K562 (cell line): ENCODE measurements at regions of chr1 and their contacts with region 1.

Region 1: DNA sequence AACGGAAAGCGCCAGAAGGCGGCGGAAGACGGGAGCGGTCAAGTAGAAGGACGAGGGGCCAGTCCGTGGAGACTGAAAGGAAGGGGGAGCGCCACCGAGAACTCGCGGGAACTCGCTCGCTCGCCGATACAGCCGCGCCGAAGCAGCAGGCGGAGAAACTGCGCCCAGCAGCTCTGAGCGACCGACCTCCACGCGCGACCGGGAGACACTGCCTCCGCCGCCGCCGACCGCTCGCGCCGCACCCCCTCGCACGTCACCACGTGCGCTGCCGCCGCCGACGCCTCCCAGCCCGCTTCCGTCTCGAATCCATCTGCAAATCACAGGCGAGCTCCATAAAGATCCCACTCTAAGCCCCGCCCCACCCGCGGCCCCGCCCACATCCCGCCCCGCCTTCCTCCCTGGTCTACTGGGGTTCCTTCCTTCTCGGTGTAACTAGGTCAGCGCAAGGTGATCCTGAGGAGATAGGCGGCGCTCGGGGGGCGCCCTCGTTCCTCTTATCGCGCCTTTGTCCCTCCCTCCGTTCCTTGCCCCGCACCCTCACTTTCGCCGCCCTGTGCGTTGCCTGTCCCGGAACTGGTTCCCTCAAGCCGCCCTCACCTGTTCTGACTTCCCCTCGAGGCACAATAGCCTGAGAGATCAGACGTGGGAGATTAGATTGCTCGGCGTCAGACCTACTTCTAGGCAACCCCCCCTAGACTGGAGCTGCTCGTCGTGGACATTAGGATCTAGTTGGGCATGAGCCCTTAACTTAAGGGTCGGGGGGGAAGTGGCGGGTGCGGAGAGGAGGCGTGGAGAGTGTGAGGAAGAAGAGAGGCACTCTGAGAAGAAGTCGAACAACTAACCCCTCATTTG is at the start of gene IVNS1ABP:
- DNase-seq: peak; percentile 97 to 98 (median 98)
- ATAC-seq: peak; percentile 79
- H3K4me3 ChIP-seq: peak within 1 kb of the TSS; percentile 77
- H3K27ac ChIP-seq: peak within 1 kb of the TSS; percentile 97
- H3K4me1 ChIP-seq: peaks cover 20 to 38% of the 10 kb centered on the region in 2 experiments
- H3K27me3 ChIP-seq: no peaks in the 10 kb centered on the region
- CTCF ChIP-seq: peak; percentile 24 to 62 (median 42); a peak in 5 of 6 replicates
- EP300 ChIP-seq: peak; percentile 45
- POLR2A ChIP-seq: peak; percentile 97
- RAD21 ChIP-seq: peak; percentile 47 to 58
- polyA plus RNA-seq, gene IVNS1ABP: 30.6 to 77.7 TPM

Region 2: DNA sequence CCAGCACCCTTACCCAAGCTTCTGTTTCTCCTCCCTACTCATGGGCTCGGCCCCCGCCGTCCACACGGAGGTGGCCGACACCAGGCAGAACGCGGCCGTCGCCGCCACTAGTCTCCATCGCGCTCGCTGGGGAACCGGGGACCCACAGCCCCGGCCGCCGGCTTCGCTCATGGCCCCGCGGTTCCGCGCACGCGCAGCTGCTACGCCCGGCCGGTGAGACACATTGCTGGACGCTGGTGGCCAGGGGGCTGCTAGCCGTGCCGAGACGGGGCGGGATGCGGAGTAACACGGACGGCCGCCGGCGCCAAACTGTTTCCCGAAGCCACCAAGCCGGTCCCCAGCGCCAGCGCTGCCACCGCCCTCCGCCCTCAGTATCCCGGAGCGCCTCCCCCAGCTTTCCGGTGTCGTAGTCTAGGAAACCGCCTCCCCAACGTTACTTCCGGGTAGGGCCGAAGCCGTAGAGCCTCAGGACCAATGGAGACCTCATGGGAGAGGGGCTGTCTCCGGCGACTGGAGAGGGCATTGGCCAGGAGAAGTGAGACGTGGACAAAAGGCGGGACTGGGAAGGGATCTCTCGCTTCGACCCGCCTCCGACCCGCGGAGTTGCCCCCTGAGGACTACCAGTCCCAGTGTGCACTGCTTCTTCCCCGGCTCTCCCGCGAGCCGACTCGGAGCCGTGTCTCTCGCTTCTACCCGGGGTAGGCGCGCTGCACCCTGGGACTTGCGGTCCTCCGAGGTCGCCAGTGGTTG is 562.6 kb before region 1 on chr1 and contains the start of gene EDEM3:
- CTCF ChIA-PET with region 1: no interaction called
- POLR2A ChIA-PET with region 1: interaction called, 3 read pairs
- in situ Hi-C with region 1: no loop called
- intact Hi-C with region 1: loop called (anchors 10 kb)
- DNase-seq: peak; percentile 97 to 100 (median 98)
- ATAC-seq: peak; percentile 93
- H3K4me3 ChIP-seq: peak within 1 kb of the TSS; percentile 83
- H3K27ac ChIP-seq: peak within 1 kb of the TSS; percentile 80
- H3K4me1 ChIP-seq: peaks cover 4 to 11% of the 10 kb centered on the region in 2 experiments; a peak in 3 of 5 replicates
- H3K27me3 ChIP-seq: no peaks in the 10 kb centered on the region
- CTCF ChIP-seq: peak in 1 of 3 experiments; percentile 0; a peak in 1 of 6 replicates
- EP300 ChIP-seq: no peak
- POLR2A ChIP-seq: peak; percentile 92
- RAD21 ChIP-seq: peak in 1 of 2 experiments; percentile 18; a peak in 1 of 4 replicates
- polyA plus RNA-seq, gene EDEM3: 15.8 to 18.5 TPM

Region 3: DNA sequence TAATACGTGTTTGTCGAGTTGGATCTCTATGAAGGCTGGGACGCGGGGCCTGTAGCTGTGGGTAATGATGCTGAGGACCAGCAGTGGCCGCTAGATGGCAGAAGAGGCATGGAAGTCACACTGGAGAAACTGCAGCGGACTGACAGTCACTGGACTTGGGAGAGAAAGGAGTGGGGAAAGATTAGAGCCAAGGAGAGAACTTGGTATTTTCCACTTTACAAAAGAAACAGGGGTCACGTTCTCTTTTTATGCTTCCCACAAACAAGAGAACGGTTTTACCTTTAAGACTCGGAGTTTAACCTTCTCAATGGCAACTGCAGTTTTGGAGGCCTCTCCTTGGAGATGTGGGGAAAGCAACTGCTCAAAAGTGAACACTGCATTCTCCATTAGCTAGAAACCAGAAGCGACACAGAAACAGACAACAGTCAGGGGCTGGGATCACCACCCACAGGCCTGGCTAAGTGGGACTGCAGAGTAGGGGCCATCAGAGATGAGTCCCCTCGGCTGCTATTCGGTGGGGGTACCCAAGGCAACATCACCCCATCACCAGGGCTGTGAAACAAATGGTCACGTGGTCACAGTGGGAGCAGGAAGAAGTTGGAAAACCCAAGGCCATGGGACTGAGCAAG is 511.5 kb before region 1 on chr1:
- CTCF ChIA-PET with region 1: no interaction called
- POLR2A ChIA-PET with region 1: no interaction called
- in situ Hi-C with region 1: no loop called
- intact Hi-C with region 1: no loop called
- DNase-seq: peak; percentile 85 to 94 (median 88)
- ATAC-seq: peak; percentile 98
- H3K4me3 ChIP-seq: no peak overlapping the region
- H3K27ac ChIP-seq: peak overlapping the region; percentile 36; the same call in 1 of the 3 replicates
- H3K4me1 ChIP-seq: peaks cover 10 to 11% of the 10 kb centered on the region in 2 experiments; a peak in 4 of 5 replicates
- H3K27me3 ChIP-seq: no peaks in the 10 kb centered on the region
- CTCF ChIP-seq: peak; percentile 91 to 98 (median 95)
- EP300 ChIP-seq: no peak
- POLR2A ChIP-seq: no peak
- RAD21 ChIP-seq: peak; percentile 93 to 97

Region 4: GRCh38 chr1:185208626-185209180 is 108.6 kb before region 1 on chr1:
- CTCF ChIA-PET with region 1: no interaction called
- POLR2A ChIA-PET with region 1: no interaction called
- in situ Hi-C with region 1: no loop called
- intact Hi-C with region 1: loop called (anchors 10 kb)
- DNase-seq: no peak
- ATAC-seq: no peak
- H3K4me3 ChIP-seq: no peak overlapping the region
- H3K27ac ChIP-seq: no peak overlapping the region
- H3K4me1 ChIP-seq: no peaks in the 10 kb centered on the region; a peak in 1 of 5 replicates
- H3K27me3 ChIP-seq: no peaks in the 10 kb centered on the region
- CTCF ChIP-seq: no peak
- EP300 ChIP-seq: no peak
- POLR2A ChIP-seq: no peak
- RAD21 ChIP-seq: no peak

Region 5: GRCh38 chr1:185300152-185300551 is 17.1 kb before region 1 on chr1:
- CTCF ChIA-PET with region 1: no interaction called
- POLR2A ChIA-PET with region 1: interaction called, 30 read pairs
- in situ Hi-C with region 1: no loop called
- intact Hi-C with region 1: no loop called
- DNase-seq: no peak
- ATAC-seq: no peak
- H3K4me3 ChIP-seq: no peak overlapping the region
- H3K27ac ChIP-seq: no peak overlapping the region
- H3K4me1 ChIP-seq: no peaks in the 10 kb centered on the region
- H3K27me3 ChIP-seq: no peaks in the 10 kb centered on the region
- CTCF ChIP-seq: no peak
- EP300 ChIP-seq: no peak
- POLR2A ChIP-seq: no peak
- RAD21 ChIP-seq: no peak

Region 6: GRCh38 chr1:185388815-185389214 is 71.6 kb after region 1 on chr1:
- CTCF ChIA-PET with region 1: no interaction called
- POLR2A ChIA-PET with region 1: no interaction called
- in situ Hi-C with region 1: no loop called
- intact Hi-C with region 1: no loop called
- DNase-seq: no peak
- ATAC-seq: peak; percentile 62
- H3K4me3 ChIP-seq: no peak overlapping the region
- H3K27ac ChIP-seq: peak overlapping the region; percentile 42; the same call in 2 of the 3 replicates
- H3K4me1 ChIP-seq: peaks cover 0 to 12% of the 10 kb centered on the region in 2 experiments; a peak in 3 of 5 replicates
- H3K27me3 ChIP-seq: no peaks in the 10 kb centered on the region
- CTCF ChIP-seq: no peak
- EP300 ChIP-seq: no peak
- POLR2A ChIP-seq: no peak
- RAD21 ChIP-seq: no peak

Region 7: DNA sequence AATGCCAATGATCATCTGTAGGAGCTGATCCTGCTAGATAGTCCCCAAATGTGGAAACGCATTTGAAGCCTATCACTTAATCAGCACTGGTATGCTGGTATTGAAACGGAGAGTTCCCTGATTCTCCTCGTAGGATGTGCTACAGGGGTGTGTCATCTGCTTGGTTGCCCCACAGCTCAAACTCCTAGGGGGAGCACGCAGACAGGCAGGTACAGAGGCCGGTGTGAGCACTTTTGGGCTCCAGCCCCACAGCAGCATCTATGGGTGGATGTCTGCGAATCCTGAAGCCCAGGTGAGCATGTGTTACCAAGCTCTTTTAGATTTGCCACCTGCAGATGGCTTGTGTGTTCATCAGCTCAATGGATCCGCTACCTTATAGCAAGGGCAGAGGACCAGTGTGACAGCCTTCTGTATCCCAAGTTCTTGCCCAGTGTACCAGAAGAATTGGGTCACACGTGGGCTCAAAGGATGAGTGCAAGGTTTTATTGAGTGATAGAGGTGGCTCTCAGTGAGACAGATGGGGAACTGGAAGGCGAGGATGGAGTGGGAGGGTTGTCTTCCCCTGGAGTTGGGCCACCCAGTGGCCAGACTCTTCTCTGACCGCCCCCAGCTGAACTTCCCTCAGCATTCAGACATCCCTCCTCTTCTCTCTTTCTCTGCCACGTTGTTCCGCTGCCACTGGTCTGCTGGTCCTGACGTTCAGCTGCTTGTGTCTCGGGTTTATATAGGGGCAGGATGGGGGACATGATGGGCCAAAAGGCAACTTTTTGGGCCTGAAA is 149.7 kb after region 1 on chr1:
- CTCF ChIA-PET with region 1: no interaction called
- POLR2A ChIA-PET with region 1: no interaction called
- in situ Hi-C with region 1: no loop called
- intact Hi-C with region 1: loop called (anchors 5 kb)
- DNase-seq: peak in 1 of 4 experiments; percentile 30
- ATAC-seq: peak; percentile 86
- H3K4me3 ChIP-seq: no peak overlapping the region
- H3K27ac ChIP-seq: no peak overlapping the region
- H3K4me1 ChIP-seq: peaks cover 0 to 8% of the 10 kb centered on the region in 2 experiments; a peak in 2 of 5 replicates
- H3K27me3 ChIP-seq: peaks cover 4% of the 10 kb centered on the region in 2 experiments; a peak in 3 of 5 replicates
- CTCF ChIP-seq: peak; percentile 5 to 47 (median 35); a peak in 2 of 6 replicates
- EP300 ChIP-seq: no peak
- POLR2A ChIP-seq: no peak
- RAD21 ChIP-seq: peak; percentile 34 to 57

Region 8: DNA sequence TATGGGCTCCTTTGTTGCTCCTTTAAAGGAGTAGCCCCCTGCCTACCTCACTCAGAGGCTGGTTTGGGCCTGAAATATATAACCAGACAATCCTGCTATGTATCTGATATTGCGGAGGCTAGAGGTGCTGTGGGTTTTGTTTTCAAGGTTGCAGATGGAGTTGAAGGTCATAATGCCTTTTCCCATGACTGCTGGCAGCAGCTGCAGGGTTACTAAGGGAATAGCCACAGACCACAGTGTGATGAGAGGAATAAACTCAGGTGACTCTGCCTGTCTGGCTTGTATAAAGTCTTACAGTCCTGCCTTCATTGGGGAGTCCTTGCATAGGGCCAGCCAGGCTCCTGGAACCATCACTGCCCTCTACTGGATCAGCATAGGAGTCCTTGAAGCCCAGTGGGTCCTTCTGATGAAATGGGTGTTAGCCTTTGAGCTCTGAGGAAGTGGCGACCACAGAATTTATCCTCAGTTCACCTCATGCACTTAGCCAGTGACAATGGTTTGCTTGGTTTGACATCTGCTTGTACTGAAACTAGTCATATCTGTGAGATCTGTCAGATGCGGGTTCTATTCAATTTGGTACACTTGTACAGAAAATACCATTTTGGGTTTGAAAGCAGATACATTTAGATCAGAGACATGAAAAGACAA is 242.5 kb after region 1 on chr1:
- CTCF ChIA-PET with region 1: no interaction called
- POLR2A ChIA-PET with region 1: no interaction called
- in situ Hi-C with region 1: no loop called
- intact Hi-C with region 1: loop called (anchors 5 kb)
- DNase-seq: peak; percentile 24 to 70 (median 46)
- ATAC-seq: peak; percentile 99
- H3K4me3 ChIP-seq: no peak overlapping the region
- H3K27ac ChIP-seq: no peak overlapping the region
- H3K4me1 ChIP-seq: no peaks in the 10 kb centered on the region
- H3K27me3 ChIP-seq: peaks cover 0 to 5% of the 10 kb centered on the region in 2 experiments; a peak in 3 of 5 replicates
- CTCF ChIP-seq: peak; percentile 57 to 67 (median 65)
- EP300 ChIP-seq: no peak
- POLR2A ChIP-seq: no peak
- RAD21 ChIP-seq: peak; percentile 54 to 81

Region 9: DNA sequence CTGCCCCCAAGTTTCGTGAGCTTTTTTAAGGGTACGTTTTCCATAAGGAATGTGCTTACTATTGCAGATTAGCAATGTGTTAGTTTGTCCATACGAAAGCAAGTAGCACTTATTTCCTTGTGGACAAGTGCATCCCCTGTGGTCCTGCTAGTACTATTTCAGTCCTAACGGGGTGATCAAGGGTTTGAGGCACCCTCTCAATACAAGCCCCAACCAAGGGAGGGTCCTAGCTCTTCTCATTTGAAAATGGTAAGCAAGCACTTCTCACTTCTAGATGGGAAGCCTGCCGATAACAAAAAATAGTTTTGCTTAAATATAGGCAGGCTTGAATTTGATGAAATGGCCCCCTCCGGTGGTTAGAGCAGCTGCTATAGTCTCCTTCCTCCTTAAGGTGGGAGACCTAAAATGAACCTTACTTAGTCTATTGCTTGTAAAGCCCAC is 352.9 kb after region 1 on chr1:
- CTCF ChIA-PET with region 1: no interaction called
- POLR2A ChIA-PET with region 1: no interaction called
- in situ Hi-C with region 1: no loop called
- intact Hi-C with region 1: loop called (anchors 5 kb)
- DNase-seq: peak in 1 of 4 experiments; percentile 24
- ATAC-seq: peak; percentile 80
- H3K4me3 ChIP-seq: no peak overlapping the region
- H3K27ac ChIP-seq: no peak overlapping the region
- H3K4me1 ChIP-seq: no peaks in the 10 kb centered on the region
- H3K27me3 ChIP-seq: peaks cover 4 to 8% of the 10 kb centered on the region in 2 experiments; a peak in 2 of 5 replicates
- CTCF ChIP-seq: peak; percentile 17 to 48 (median 42); a peak in 4 of 6 replicates
- EP300 ChIP-seq: no peak
- POLR2A ChIP-seq: no peak
- RAD21 ChIP-seq: peak; percentile 61 to 64